Activated T-helper 1 cell treated with anti-CD3 and anti-CD28 coated beads, Interleukin-12 subunit alpha, Interleukin-12 subunit beta, Interleukin-2, Interleukin-4 antibody, amounts not matched to agents 30 ng/mL and 10 ng/mL and 1 ng/mL, durations not matched to agents 14 hours and 24 hours and 36 hours (primary cell): ENCODE measurements at regions of chr3 and their contacts with region 1.

Region 1: DNA sequence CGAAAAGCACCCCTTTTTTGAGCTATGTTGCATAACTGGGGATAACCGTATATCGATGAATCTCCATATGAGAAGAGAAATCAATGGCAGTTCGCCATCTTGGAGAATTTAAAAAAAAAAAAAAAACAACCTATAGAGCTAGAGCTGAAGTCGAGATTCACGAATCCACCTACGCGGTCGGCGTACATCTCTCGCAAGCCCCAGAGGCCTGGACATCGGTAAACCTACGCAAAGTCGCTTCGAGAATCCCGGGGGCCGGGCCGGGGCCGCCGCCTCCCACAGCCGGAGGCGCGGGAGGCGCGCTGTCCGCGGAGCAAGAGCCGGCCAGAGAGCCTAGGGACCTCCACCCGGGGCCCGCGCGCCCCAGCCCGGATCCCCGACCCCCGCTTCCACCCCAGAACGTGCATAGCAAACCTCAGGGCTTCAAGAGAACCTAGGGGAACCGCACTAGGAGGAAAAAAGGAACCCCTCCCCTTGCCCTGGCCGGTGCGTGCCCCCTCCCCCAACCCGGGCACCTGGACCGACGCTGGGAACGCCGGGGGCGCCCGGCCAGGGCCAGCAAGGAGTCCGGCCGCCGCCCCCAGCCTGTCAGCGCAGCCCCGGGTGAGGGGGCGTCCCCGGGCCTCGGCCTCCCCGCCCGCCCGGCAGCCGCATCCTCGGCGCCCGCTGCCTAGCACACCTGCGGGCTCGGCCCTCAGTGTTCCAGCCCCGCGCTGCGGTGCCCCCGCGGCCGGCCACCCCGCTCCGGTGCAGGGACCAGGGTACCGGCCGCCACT is 567 bp downstream of the PFN2 start:
- DNase-seq: peak; percentile 56
- H3K4me3 Mint-ChIP-seq: peak overlapping the region; percentile 80
- H3K27ac Mint-ChIP-seq: no peak overlapping the region
- H3K4me1 Mint-ChIP-seq: peaks cover 12% of the 10 kb centered on the region
- H3K27me3 Mint-ChIP-seq: peaks cover 54% of the 10 kb centered on the region

Region 2: GRCh38 chr3:149670742-149671492 is 299.2 kb before region 1 on chr3:
- intact Hi-C with region 1: no loop called
- DNase-seq: no peak
- H3K4me3 Mint-ChIP-seq: no peak overlapping the region
- H3K27ac Mint-ChIP-seq: no peak overlapping the region
- H3K4me1 Mint-ChIP-seq: no peaks in the 10 kb centered on the region
- H3K27me3 Mint-ChIP-seq: peaks cover 14% of the 10 kb centered on the region

Region 3: GRCh38 chr3:149925860-149926259 is 44.3 kb before region 1 on chr3:
- intact Hi-C with region 1: no loop called
- DNase-seq: no peak
- H3K4me3 Mint-ChIP-seq: no peak overlapping the region
- H3K27ac Mint-ChIP-seq: no peak overlapping the region
- H3K4me1 Mint-ChIP-seq: no peaks in the 10 kb centered on the region
- H3K27me3 Mint-ChIP-seq: no peaks in the 10 kb centered on the region

Region 4: GRCh38 chr3:149936812-149937233 is 33.3 kb before region 1 on chr3:
- intact Hi-C with region 1: loop called (anchors 2 kb)
- DNase-seq: no peak
- H3K4me3 Mint-ChIP-seq: no peak overlapping the region
- H3K27ac Mint-ChIP-seq: no peak overlapping the region
- H3K4me1 Mint-ChIP-seq: peaks cover 7% of the 10 kb centered on the region
- H3K27me3 Mint-ChIP-seq: no peaks in the 10 kb centered on the region

Region 5: DNA sequence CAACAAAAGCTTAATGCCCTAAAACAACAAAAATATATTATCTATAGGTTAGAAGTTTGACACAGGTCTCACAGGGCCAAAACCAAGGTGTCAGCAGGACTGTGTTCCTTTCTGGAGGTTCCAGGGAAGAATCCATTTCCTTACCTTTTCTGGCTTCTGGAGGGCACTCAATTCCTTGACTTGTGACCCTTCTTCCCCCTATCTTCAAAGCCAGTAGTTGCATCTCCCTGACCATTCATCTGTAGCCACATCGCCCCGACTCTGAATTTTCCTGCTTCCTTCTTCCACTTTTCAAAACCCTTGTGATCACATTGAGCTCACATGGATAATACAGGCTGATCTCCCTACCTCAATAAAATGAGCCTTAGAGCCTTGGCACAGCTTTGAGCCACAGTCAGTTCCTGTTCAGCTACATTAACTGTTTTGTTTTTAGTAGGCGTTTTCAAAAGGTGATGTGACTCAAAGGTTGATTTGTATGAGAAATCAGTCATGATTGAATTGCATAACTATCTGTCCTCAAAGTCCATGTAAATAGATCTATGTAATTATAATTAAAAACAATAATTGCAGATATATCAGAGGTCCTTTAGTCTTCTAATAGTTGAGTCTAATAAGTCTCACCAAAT is 11.8 kb before region 1 on chr3:
- intact Hi-C with region 1: loop called (anchors 1 kb)
- DNase-seq: no peak
- H3K4me3 Mint-ChIP-seq: no peak overlapping the region
- H3K27ac Mint-ChIP-seq: no peak overlapping the region
- H3K4me1 Mint-ChIP-seq: peaks cover 14% of the 10 kb centered on the region
- H3K27me3 Mint-ChIP-seq: no peaks in the 10 kb centered on the region

Region 6: GRCh38 chr3:150220799-150221198 is 250.7 kb after region 1 on chr3:
- intact Hi-C with region 1: loop called (anchors 1 kb)
- DNase-seq: no peak
- H3K4me3 Mint-ChIP-seq: no peak overlapping the region
- H3K27ac Mint-ChIP-seq: no peak overlapping the region
- H3K4me1 Mint-ChIP-seq: no peaks in the 10 kb centered on the region
- H3K27me3 Mint-ChIP-seq: peaks cover 19% of the 10 kb centered on the region